AG04450 (cell line): ENCODE measurements at regions of chr3 and their contacts with region 1.

Region 1: DNA sequence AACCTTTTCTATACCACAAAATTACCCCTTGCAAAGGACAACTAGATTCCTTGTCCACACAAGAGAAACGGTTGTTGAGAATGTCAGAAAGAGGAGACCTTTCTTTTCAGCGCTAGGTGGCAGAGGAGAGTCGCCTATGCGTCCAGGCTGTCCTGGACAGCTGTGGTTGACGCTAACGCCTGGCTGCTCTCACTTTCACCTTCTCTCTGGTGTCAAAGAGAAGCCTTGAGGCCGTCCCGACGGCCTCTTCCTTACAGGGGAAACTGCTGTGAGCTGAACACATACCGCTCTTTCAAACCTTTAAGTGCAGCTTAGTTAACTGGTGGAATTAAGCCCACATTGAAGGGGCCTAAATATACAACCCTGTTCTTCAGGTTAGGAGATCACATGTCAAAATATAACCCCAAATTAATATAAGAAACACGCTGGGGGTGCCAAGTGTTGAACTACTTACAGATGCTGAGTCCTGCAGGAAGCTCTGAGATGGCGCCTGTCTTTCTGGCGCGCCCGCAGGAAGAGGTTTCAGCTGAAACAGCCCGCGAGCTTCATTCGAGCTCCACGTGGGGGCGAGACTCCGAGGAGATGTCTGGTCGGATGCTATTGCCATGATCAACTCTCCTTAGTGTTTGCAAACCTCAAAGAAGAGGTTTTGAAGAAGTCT is 26.1 kb upstream of the KBTBD8 start:
- DNase-seq: peak; percentile 50
- H3K4me3 ChIP-seq: peak overlapping the region; percentile 53
- H3K27ac ChIP-seq: no peak overlapping the region
- H3K27me3 ChIP-seq: peaks cover 2% of the 10 kb centered on the region
- CTCF ChIP-seq: peak; percentile 97

Region 2: GRCh38 chr3:66957367-66957766 is 14.7 kb before region 1 on chr3:
- CTCF ChIA-PET with region 1: interaction called, 28 read pairs
- POLR2A ChIA-PET with region 1: no interaction called
- DNase-seq: no peak
- H3K4me3 ChIP-seq: no peak overlapping the region
- H3K27ac ChIP-seq: no peak overlapping the region
- H3K27me3 ChIP-seq: peaks cover 10% of the 10 kb centered on the region
- CTCF ChIP-seq: no peak

Region 3: GRCh38 chr3:66989860-66990665 is 18.0 kb after region 1 on chr3:
- CTCF ChIA-PET with region 1: interaction called, 52 read pairs
- POLR2A ChIA-PET with region 1: no interaction called
- DNase-seq: no peak
- H3K4me3 ChIP-seq: no peak overlapping the region
- H3K27ac ChIP-seq: no peak overlapping the region
- H3K27me3 ChIP-seq: no peaks in the 10 kb centered on the region
- CTCF ChIP-seq: peak; percentile 30

Region 4: GRCh38 chr3:67006460-67006859 is 34.4 kb after region 1 on chr3:
- CTCF ChIA-PET with region 1: interaction called, 21 read pairs
- POLR2A ChIA-PET with region 1: no interaction called
- DNase-seq: peak; percentile 75
- H3K4me3 ChIP-seq: no peak overlapping the region
- H3K27ac ChIP-seq: no peak overlapping the region
- H3K27me3 ChIP-seq: no peaks in the 10 kb centered on the region
- CTCF ChIP-seq: no peak

Region 5: GRCh38 chr3:67037615-67038014 is 65.6 kb after region 1 on chr3:
- CTCF ChIA-PET with region 1: interaction called, 92 read pairs
- POLR2A ChIA-PET with region 1: no interaction called
- DNase-seq: no peak
- H3K4me3 ChIP-seq: no peak overlapping the region
- H3K27ac ChIP-seq: no peak overlapping the region
- H3K27me3 ChIP-seq: no peaks in the 10 kb centered on the region
- CTCF ChIP-seq: no peak

Region 6: GRCh38 chr3:68876112-68876713 is 1904.2 kb after region 1 on chr3:
- CTCF ChIA-PET with region 1: interaction called, 50 read pairs
- POLR2A ChIA-PET with region 1: no interaction called
- DNase-seq: peak; percentile 39
- H3K4me3 ChIP-seq: no peak overlapping the region
- H3K27ac ChIP-seq: no peak overlapping the region
- H3K27me3 ChIP-seq: peaks cover 3% of the 10 kb centered on the region
- CTCF ChIP-seq: peak; percentile 92